ENCODE measurements at regions of chr7 and their contacts with region 1.

Region 1: DNA sequence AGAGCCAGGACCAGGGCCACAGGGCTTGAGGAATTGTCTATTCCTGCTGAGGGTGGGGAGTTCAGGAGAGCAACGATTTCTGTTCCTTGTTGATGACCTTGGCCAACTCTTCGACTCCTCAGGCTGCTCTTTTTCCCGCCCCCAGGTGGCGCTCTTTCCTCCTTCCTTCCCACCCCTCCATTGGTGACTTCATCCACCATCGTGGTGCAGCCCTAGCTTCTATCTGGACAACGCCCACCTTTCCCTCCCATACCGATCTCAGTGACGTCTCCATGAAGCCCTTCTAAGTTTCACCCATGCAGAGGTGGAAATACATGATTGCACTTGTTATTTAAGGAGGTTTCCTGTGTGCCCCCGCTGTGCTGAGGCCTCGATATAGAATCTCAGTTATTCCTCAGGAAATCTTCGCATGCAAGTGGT is 22.1 kb upstream of the CARD11 start:
- DNase-seq: no peak
- ATAC-seq: no peak

Region 2: GRCh38 chr7:2785071-2785500 is 280.6 kb before region 1 on chr7:
- intact Hi-C with region 1: no loop called
- DNase-seq: no peak
- ATAC-seq: peak; percentile 37

Region 3: GRCh38 chr7:2993868-2994267 is 71.9 kb before region 1 on chr7:
- intact Hi-C with region 1: no loop called
- DNase-seq: no peak
- ATAC-seq: no peak

Region 4: DNA sequence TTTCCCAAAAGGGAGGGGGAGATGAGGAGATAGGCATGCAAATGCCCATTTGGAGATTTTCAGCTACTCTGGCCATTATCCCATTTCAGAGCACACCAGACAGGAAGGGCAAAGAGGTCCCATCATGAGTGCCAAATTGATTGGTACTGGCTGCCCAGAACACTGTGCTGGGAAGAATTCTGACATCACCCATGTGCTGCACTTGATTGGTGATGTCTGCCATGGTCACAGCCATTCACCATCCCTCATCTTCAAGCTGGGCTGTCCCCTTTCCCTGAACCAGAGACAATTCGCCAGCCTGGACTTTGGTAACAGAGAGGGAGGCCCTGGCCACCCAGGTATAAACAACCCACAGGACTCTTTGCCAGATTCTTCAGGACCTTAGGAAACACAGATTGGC is 1840.9 kb after region 1 on chr7:
- intact Hi-C with region 1: loop called (anchors 10 kb)
- DNase-seq: no peak
- ATAC-seq: no peak